ENCODE measurements at regions of chr3 and their contacts with region 1.

Region 1: GRCh38 chr3:49469936-49470713 is at the start of gene DAG1:
- DNase-seq: peak; percentile 100
- ATAC-seq: peak; percentile 97
- total RNA-seq, gene DAG1: 165 TPM

Region 2: DNA sequence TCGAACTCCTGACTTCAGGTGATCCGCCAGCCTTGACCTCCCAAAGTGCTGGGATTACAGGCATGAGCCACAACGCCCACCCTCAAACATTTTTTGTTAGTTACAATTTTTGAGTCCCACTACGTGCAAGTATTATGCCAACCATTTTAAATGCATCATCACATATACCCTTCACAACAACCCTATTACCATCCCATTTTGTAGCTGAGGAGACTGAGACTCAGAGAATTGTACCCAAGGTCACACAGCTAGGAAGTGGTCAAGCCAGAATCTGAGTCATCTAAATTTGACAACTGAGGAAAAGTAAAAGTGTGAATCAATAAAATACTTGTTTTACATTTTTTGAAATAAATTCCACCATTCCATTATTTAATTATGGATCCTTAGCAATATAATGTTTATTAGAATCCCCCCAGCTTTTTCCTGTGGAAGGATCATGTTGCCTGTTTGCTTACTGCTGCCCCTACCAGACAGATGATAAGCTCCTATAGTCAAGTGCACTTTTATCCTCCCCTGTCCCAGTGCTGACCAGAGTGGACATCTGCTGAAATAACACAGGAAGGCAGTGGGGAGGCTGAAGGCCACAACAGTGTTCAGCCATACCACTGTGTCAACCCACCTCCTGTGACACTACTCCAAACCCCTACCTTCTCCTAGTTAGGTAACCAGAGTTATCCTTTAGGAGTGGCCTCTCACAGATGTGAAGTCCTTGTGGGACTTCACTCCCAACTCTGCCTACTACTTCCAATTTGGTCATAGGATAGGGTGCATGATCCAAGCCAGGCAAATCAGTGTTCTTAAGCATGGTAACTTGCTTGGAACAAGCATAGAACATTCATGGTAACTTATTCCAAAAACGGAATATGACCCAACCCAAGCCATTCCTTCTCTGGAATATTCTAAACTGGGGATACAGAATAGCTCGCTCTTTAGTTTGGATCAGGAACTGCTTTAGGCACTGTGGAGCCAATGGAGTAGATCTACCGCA is 650.6 kb before region 1 on chr3:
- intact Hi-C with region 1: loop called (anchors 5 kb)
- DNase-seq: no peak
- ATAC-seq: no peak

Region 3: DNA sequence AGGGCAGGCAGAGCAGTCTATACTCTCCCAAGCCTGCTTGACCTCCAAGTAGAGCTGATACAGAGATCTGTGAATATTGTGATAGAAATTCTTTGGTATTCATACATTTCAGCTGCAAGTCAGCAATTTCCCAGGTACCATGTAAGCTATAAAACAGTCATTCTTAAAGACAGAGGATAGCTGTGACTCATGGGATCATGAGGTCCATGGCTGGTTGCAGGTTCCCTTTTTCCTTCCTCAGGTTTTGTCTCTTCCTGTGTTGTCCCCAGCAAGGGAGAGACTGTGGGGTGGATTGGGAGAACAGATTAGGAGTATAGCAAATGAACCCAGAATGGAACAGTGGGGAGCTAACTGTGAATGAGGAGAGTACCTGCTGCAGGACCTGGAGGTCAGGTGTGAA is 485.5 kb before region 1 on chr3:
- intact Hi-C with region 1: no loop called
- DNase-seq: no peak
- ATAC-seq: no peak